Heart right ventricle (tissue), 16 donors: ENCODE measurements at regions of chr19 and their contacts with region 1.

Region 1: GRCh38 chr19:48321622-48322591 is 3.4 kb upstream of the EMP3 start:
- DNase-seq: peak; percentile 98 to 100
- ATAC-seq: peak; percentile 90 to 94 (median 92)
- H3K4me3 ChIP-seq: peak overlapping the region; percentile 40 to 68 (median 60)
- H3K27ac ChIP-seq: peak overlapping the region; percentile 90 to 100 (median 98)
- H3K4me1 ChIP-seq: peaks cover 4 to 65% (median 48%) of the 10 kb centered on the region in 9 donors
- H3K27me3 ChIP-seq: no peaks in the 10 kb centered on the region
- CTCF ChIP-seq: peak in 4 of 9 donors; percentile 14 to 33 (median 25)

Region 2: DNA sequence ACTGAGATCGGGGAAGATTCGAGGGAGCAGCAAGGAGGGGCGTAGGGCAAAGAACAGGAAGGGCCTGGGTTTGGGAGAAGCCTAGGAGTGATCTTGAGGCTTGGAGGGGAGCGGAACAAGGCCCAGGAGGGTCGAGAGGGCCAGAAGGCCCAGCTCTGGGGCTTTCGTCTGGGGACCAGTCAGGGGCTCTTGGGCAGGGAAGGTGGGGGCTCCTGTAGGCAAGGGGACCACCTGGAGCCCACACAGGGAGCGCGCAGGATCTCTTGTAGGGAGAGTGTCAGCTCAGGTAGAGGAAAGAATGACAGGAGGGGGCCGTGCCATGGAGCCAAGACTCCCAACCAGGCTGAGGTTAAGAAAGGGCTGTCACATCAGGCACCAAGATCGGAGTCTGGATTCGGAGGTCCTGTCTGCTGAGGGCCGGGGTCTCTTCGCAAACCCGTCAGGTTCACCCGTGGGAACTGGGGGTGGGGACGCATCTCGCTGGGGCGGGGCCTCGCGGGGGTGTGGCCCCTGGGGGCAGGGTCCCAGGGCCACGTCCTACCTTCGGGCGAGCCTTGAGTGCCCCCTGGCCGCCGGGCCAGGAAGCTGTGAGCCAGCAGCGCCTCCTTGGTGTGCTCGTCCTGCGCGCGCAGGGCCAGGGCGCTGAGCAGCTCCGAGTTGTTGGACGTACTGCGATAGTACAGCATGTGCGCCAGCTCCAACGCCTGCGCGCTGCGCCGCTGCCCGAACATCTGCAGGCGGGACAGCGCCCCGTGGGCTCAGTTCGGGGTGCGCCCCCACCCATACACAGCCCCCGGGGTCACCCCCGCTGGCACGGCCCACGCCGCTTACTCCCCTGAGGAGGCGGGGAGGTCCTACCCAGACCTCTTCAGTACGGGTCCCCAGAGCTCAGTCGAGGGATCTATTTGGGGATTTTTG is 11.8 kb after region 1 on chr19:
- intact Hi-C with region 1: loop called in 2 of 10 experiments (anchors 1 to 2 kb)
- DNase-seq: peak; percentile 86 to 92
- ATAC-seq: peak; percentile 83 to 89 (median 87)
- H3K4me3 ChIP-seq: peak overlapping the region in 9 of 10 donors; percentile 31 to 67 (median 54)
- H3K27ac ChIP-seq: peak overlapping the region; percentile 64 to 94 (median 85)
- H3K4me1 ChIP-seq: peaks cover 10 to 56% (median 31%) of the 10 kb centered on the region in 9 donors
- H3K27me3 ChIP-seq: no peaks in the 10 kb centered on the region
- CTCF ChIP-seq: peak; percentile 74 to 97 (median 87)

Region 3: DNA sequence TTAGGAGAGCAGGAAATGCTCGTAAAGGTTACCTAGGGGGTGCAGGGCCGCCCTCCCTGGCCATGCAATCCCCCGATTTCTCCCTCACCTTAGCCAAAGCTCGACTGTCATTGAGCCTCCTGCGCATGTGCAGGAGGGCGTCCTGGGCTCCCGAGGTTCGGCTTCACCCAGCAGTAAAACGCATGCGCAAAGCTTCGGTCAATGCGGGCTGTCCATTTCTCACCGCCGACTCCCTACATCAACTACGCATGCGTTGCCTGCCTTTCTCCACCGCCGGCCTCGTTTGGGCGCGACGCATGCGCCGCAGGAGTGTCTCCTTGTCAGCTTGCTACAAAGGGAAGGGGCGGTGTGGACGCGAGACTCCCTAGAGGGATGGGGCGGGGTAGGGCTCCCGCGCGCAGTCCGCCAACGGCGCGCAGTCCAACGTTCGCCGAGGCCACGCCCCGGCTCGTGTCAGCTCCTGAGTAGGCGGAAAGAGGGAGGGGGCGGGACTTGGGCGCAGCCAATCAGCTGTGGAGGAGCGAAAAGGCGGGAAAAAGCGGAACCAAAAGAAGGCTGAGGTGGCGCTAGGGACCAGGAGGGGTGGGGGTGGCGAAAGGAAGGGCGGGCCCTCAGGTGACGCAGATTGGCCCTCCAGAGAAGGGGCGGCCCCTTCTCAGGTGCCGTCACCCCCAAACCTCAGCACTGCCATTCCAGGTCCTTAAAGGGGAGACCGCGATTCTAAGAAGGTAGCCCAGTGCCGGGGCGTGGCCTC is 42.1 kb after region 1 on chr19 and contains the starts of genes SYNGR4 and TMEM143:
- intact Hi-C with region 1: loop called in 3 of 10 experiments (anchors 5 kb)
- DNase-seq: peak; percentile 99
- ATAC-seq: peak; percentile 95 to 98 (median 96)
- H3K4me3 ChIP-seq: peak within 1 kb of the TSS; percentile 47 to 86 (median 68)
- H3K27ac ChIP-seq: peak within 1 kb of the TSS; percentile 87 to 99 (median 96)
- H3K4me1 ChIP-seq: peaks cover 0 to 16% (median 5%) of the 10 kb centered on the region in 9 donors
- H3K27me3 ChIP-seq: no peaks in the 10 kb centered on the region
- CTCF ChIP-seq: no peak
- total RNA-seq, gene SYNGR4: not detected
- total RNA-seq, gene TMEM143: 51.8 to 110 (median 89.5) TPM

Region 4: DNA sequence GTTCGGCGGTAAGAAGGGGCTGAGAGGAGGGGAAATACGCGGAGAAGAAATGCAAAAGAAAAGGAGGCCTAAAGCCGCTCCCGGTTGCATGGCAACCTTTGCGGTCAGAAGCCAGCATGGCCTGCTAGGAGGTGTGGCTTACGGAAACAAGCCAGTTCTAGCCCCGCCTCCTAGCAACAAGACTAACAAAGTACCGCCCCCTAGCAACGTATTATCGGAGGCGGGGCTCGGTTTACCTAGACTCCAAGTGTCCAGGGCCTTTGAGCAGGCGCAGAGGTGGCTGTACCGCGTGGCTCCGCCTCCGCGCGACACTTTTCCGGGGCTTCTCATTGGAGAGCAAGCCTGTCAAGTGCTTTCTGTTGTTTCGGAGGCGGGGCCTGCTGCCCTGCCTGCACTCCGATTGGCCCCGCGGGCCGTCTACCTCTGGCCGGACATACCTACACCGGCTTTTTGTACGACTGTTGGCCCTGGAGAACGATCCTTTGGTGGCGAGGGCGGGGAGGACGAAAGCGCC is 146.9 kb after region 1 on chr19:
- intact Hi-C with region 1: no loop called
- DNase-seq: peak; percentile 99
- ATAC-seq: peak; percentile 93 to 97 (median 95)
- H3K4me3 ChIP-seq: peak overlapping the region; percentile 82 to 98 (median 90)
- H3K27ac ChIP-seq: peak overlapping the region; percentile 97 to 100 (median 99)
- H3K4me1 ChIP-seq: peaks cover 7 to 36% (median 15%) of the 10 kb centered on the region in 9 donors
- H3K27me3 ChIP-seq: no peaks in the 10 kb centered on the region
- CTCF ChIP-seq: peak in 1 of 9 donors; percentile 31